ENCODE measurements at regions of chr1 and their contacts with region 1.

Region 1: GRCh38 chr1:211514030-211514754 is 22.2 kb upstream of the RD3 start:
- DNase-seq: peak; percentile 79
- ATAC-seq: peak; percentile 74
- H3K4me3 ChIP-seq: peak overlapping the region in 1 of 5 experiments; percentile 28
- H3K4me3 Mint-ChIP-seq: peak overlapping the region; percentile 86
- H3K27ac ChIP-seq: no peak overlapping the region
- H3K27ac Mint-ChIP-seq: peak overlapping the region; percentile 77
- H3K4me1 ChIP-seq: peaks cover 27 to 44% of the 10 kb centered on the region in 2 donors
- H3K4me1 Mint-ChIP-seq: peaks cover 40% of the 10 kb centered on the region
- H3K27me3 ChIP-seq: peaks cover 0 to 9% (median 3%) of the 10 kb centered on the region in 4 experiments
- H3K27me3 Mint-ChIP-seq: peaks cover 11% of the 10 kb centered on the region
- CTCF ChIP-seq: peak; percentile 81

Region 2: DNA sequence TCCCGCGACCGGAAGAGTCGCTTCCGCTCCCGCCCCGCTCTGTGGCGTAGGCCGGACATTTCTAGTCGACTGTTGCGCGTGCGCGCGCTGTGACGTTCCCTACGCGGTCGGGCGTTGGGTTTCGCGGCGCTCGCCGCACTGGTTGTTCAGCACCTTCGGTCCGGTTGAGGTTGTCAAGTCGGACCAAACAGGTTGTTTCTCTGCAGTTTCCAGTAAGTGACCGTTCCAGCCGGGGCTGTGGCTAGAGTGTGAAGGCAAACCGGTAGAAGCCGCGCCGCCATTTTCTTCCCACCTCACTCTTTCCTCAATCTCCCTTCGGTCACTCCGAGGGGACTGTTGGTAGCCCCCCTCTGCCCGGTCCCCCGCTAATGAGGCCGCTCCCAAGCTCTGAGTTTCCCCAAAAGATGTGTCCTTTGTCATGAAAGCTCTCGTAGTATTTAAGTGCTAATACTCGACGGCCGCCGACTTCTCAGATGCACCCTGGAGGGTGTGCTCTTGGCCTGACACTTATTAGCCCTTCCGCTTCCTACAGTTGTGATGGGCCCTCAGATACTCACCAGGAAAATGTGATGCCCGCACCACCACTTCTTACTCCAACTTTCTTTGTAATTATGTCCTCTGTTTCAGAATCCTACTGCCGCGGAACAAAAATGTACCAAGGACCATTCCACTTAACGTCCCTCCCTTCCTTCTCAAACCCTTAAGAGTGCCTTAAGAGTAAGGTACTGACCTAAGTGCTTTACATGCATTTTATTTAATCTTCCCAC is 131.3 kb before region 1 on chr1:
- CTCF ChIA-PET with region 1: no interaction called
- POLR2A ChIA-PET with region 1: no interaction called
- intact Hi-C with region 1: loop called (anchors 10 kb)
- DNase-seq: peak; percentile 89
- ATAC-seq: peak; percentile 96
- H3K4me3 ChIP-seq: peak overlapping the region; percentile 75 to 92 (median 88)
- H3K4me3 Mint-ChIP-seq: peak overlapping the region; percentile 89
- H3K27ac ChIP-seq: peak overlapping the region; percentile 96 to 98
- H3K27ac Mint-ChIP-seq: peak overlapping the region; percentile 100
- H3K4me1 ChIP-seq: peaks cover 13 to 14% of the 10 kb centered on the region in 2 donors
- H3K4me1 Mint-ChIP-seq: peaks cover 22% of the 10 kb centered on the region
- H3K27me3 ChIP-seq: no peaks in the 10 kb centered on the region
- H3K27me3 Mint-ChIP-seq: no peaks in the 10 kb centered on the region
- CTCF ChIP-seq: no peak

Region 3: DNA sequence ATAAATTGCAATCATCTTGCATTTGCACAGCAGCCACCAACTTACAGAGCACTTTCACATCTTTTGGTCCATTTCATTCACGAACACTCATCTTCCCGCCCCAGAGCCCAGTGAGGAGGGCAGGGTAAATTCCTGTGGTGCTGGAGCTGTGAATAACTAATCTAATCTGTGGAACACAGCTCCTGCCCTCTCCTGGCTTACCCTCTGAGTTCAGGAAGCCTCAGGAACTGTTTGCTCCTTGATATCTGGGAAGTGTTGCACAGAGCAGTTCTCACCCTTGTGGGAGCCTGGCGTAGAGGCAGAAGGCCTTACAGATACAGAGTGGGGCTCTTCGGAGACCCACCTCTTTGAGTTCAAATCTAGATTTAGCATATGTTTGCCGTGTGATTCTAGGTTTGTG is 10.7 kb before region 1 on chr1:
- CTCF ChIA-PET with region 1: interaction called, 11 read pairs
- POLR2A ChIA-PET with region 1: no interaction called
- intact Hi-C with region 1: no loop called
- DNase-seq: no peak
- ATAC-seq: no peak
- H3K4me3 ChIP-seq: no peak overlapping the region
- H3K4me3 Mint-ChIP-seq: no peak overlapping the region
- H3K27ac ChIP-seq: no peak overlapping the region
- H3K27ac Mint-ChIP-seq: no peak overlapping the region
- H3K4me1 ChIP-seq: no peaks in the 10 kb centered on the region
- H3K4me1 Mint-ChIP-seq: no peaks in the 10 kb centered on the region
- H3K27me3 ChIP-seq: peaks cover 0 to 16% (median 0%) of the 10 kb centered on the region in 4 experiments
- H3K27me3 Mint-ChIP-seq: peaks cover 15% of the 10 kb centered on the region
- CTCF ChIP-seq: no peak

Region 4: GRCh38 chr1:211648980-211649934 is 135.1 kb after region 1 on chr1:
- CTCF ChIA-PET with region 1: interaction called, 27 read pairs
- POLR2A ChIA-PET with region 1: no interaction called
- intact Hi-C with region 1: no loop called
- DNase-seq: no peak
- ATAC-seq: peak; percentile 63
- H3K4me3 ChIP-seq: no peak overlapping the region
- H3K4me3 Mint-ChIP-seq: no peak overlapping the region
- H3K27ac ChIP-seq: no peak overlapping the region
- H3K27ac Mint-ChIP-seq: no peak overlapping the region
- H3K4me1 ChIP-seq: no peaks in the 10 kb centered on the region
- H3K4me1 Mint-ChIP-seq: no peaks in the 10 kb centered on the region
- H3K27me3 ChIP-seq: peaks cover 0 to 6% (median 1%) of the 10 kb centered on the region in 4 experiments
- H3K27me3 Mint-ChIP-seq: peaks cover 9% of the 10 kb centered on the region
- CTCF ChIP-seq: peak; percentile 56

Region 5: DNA sequence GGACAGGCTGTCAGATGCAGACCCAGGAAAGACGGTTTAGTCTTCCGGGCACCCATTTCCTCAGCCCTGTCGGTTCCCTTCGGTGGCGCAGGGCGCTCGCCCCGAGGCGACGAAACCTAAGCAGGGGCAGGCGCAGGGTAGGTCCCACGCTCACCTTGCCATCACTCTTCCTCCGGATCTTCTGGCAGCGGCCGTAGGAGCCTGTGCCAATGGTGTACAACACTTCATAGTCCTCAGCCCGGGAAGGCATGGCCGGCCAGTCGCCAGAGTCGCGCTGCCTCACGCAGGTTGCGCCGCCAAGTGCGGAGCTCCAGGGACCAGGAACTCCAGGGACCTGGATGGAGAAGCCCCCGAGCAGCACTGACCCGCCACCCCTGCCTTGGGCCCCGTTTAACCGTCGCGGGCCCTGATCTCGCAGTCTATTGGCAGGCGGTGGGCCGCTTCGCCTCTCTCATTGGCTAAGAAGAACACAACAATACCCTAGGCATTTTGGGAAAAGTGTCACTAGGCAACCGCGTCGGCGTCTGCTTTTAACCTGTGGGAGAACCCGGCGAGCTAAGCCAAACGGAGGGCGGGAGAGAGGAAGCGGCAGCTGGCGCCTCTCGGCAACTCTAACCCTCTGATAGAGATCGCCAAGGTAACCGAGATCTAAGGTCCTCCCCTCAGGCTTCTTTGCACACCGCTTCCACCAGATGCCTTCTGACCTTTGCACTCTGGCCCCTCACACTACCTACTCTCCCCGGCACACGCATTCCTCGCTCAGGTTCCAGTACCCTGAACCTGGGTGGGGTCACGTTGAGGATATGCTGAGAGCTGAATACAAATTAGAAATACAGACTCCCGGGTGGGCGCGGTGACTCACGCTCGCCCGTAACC is 161.3 kb after region 1 on chr1 and contains the start of gene NEK2:
- CTCF ChIA-PET with region 1: interaction called, 4 read pairs
- POLR2A ChIA-PET with region 1: no interaction called
- intact Hi-C with region 1: loop called (anchors 1 kb)
- DNase-seq: peak; percentile 82
- ATAC-seq: peak; percentile 88
- H3K4me3 ChIP-seq: peak within 1 kb of the TSS; percentile 19 to 80 (median 68)
- H3K4me3 Mint-ChIP-seq: peak within 1 kb of the TSS; percentile 93
- H3K27ac ChIP-seq: peak within 1 kb of the TSS in 1 of 2 donors; percentile 49
- H3K27ac Mint-ChIP-seq: peak within 1 kb of the TSS; percentile 66
- H3K4me1 ChIP-seq: peaks cover 21 to 30% of the 10 kb centered on the region in 2 donors
- H3K4me1 Mint-ChIP-seq: peaks cover 35% of the 10 kb centered on the region
- H3K27me3 ChIP-seq: no peaks in the 10 kb centered on the region
- H3K27me3 Mint-ChIP-seq: no peaks in the 10 kb centered on the region
- CTCF ChIP-seq: no peak
- total RNA-seq, gene NEK2: 0.32 TPM in 1 of 2 replicates, not detected in the other

Measured in B cell (primary cell).